H1 (cell line): ENCODE measurements at regions of chr1 and their contacts with region 1.

Region 1: DNA sequence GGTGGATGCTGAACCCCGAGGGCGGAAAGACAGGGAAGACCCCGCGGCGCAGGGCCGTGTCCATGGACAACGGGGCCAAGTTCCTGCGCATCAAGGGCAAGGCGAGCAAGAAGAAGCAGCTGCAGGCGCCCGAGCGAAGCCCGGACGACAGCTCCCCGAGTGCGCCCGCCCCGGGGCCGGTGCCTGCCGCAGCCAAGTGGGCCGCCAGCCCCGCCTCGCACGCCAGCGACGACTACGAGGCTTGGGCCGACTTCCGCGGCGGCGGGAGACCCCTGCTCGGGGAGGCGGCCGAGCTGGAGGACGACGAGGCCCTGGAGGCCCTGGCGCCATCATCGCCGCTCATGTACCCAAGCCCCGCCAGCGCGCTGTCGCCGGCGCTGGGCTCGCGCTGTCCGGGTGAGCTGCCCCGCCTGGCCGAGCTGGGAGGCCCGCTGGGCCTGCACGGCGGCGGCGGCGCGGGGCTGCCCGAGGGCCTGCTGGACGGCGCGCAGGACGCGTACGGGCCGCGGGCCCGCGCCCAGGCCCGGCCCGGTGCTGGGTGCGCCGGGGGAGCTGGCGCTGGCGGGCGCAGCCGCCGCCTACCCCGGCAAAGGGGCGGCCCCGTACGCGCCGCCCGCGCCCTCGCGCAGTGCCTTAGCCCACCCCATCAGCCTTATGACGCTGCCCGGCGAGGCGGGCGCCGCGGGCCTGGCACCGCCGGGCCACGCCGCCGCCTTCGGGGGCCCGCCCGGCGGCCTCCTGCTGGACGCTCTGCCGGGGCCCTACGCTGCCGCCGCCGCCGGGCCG is 20.7 kb downstream of the FOXO6 start:
- DNase-seq: no peak
- H3K4me3 ChIP-seq: peak overlapping the region; percentile 44 to 72 (median 56)
- H3K27ac ChIP-seq: no peak overlapping the region
- H3K4me1 ChIP-seq: peaks cover 0 to 29% (median 20%) of the 10 kb centered on the region in 4 experiments; a peak in 6 of 7 replicates
- H3K27me3 ChIP-seq: peaks cover 5 to 40% (median 34%) of the 10 kb centered on the region in 4 experiments
- CTCF ChIP-seq: no peak
- EP300 ChIP-seq: no peak
- POLR2A ChIP-seq: no peak
- RAD21 ChIP-seq: no peak

Region 2: GRCh38 chr1:41341772-41342562 is 39.9 kb before region 1 on chr1:
- CTCF ChIA-PET with region 1: no interaction called
- POLR2A ChIA-PET with region 1: no interaction called
- DNase-seq: no peak
- H3K4me3 ChIP-seq: no peak overlapping the region
- H3K27ac ChIP-seq: no peak overlapping the region
- H3K4me1 ChIP-seq: peaks cover 0 to 7% (median 2%) of the 10 kb centered on the region in 4 experiments; a peak in 3 of 7 replicates
- H3K27me3 ChIP-seq: no peaks in the 10 kb centered on the region; a peak in 2 of 7 replicates
- CTCF ChIP-seq: no peak
- EP300 ChIP-seq: no peak
- POLR2A ChIP-seq: no peak
- RAD21 ChIP-seq: no peak

Region 3: GRCh38 chr1:41366455-41367287 is 15.2 kb before region 1 on chr1:
- CTCF ChIA-PET with region 1: interaction called, 173 read pairs
- POLR2A ChIA-PET with region 1: interaction called, 22 read pairs
- DNase-seq: peak in 1 of 2 experiments; percentile 71
- H3K4me3 ChIP-seq: peak overlapping the region; percentile 30 to 70 (median 52)
- H3K27ac ChIP-seq: no peak overlapping the region
- H3K4me1 ChIP-seq: peaks cover 16 to 62% (median 48%) of the 10 kb centered on the region in 4 experiments
- H3K27me3 ChIP-seq: peaks cover 21 to 50% (median 36%) of the 10 kb centered on the region in 4 experiments
- CTCF ChIP-seq: no peak
- EP300 ChIP-seq: no peak
- POLR2A ChIP-seq: no peak
- RAD21 ChIP-seq: no peak

Region 4: DNA sequence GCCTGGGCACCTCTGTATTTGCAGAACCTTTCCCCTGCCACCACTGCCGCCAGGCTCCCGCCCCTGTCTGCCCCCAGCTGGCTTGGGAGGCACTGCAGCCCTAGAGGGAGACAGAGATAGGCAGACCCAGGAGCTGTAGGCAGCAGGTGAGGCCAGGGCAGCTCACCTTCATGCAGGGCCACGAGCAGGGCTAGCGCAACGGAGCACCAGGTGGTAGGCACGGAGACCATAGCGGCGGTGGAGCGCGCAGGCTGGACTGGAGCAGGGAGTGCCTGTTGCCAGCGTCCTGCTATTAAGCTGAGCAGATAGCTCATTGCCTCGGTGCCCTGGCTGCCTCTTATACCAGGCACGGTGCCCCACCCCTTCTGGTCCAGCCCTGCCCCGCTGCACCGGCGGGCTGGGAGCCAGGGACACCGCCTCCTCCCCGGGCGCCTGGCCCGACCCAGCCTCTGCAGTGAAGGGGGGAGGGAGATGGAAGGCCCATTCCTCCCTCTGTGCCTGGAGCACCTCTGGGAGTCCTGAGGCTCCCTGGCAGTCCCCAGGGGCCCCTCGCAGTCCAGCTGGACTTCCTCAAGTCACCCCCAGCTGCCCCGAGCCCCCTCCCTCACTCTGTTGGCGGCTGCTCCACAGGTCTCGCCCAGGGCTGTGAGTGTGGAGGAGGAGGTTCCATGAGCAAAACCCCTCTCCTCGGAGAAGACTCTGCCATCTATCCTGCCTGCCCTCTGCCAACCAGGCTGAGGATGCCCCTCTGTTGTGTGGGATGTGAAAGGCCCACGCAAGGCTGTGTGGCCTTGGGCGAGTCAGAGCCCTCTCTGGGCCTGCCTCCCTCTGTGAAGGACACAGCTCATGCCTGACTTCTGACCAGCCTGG is 102.7 kb after region 1 on chr1 and contains the start of gene EDN2:
- CTCF ChIA-PET with region 1: no interaction called
- POLR2A ChIA-PET with region 1: no interaction called
- DNase-seq: no peak
- H3K4me3 ChIP-seq: no peak within 1 kb of the TSS
- H3K27ac ChIP-seq: no peak within 1 kb of the TSS
- H3K4me1 ChIP-seq: peaks cover 13 to 31% (median 24%) of the 10 kb centered on the region in 4 experiments
- H3K27me3 ChIP-seq: peaks cover 0 to 2% (median 0%) of the 10 kb centered on the region in 4 experiments; a peak in 2 of 7 replicates
- CTCF ChIP-seq: peak in 2 of 3 experiments; percentile 64 to 68; a peak in 3 of 4 replicates
- EP300 ChIP-seq: no peak
- POLR2A ChIP-seq: no peak
- RAD21 ChIP-seq: peak; percentile 31 to 45; a peak in 3 of 4 replicates
- total RNA-seq, gene EDN2: 0.39 TPM in 1 of 2 replicates, not detected in the other